Activated T-helper 1 cell treated with anti-CD3 and anti-CD28 coated beads, Interleukin-12 subunit alpha, Interleukin-12 subunit beta, Interleukin-2, Interleukin-4 antibody, amounts not matched to agents 30 ng/mL and 10 ng/mL and 1 ng/mL, durations not matched to agents 14 hours and 24 hours and 36 hours (primary cell): ENCODE measurements at regions of chr3 and their contacts with region 1.

Region 1: GRCh38 chr3:100697723-100698285 is 11.5 kb upstream of the TFG start:
- DNase-seq: no peak
- H3K4me3 Mint-ChIP-seq: no peak overlapping the region
- H3K27ac Mint-ChIP-seq: no peak overlapping the region
- H3K4me1 Mint-ChIP-seq: no peaks in the 10 kb centered on the region
- H3K27me3 Mint-ChIP-seq: peaks cover 33% of the 10 kb centered on the region

Region 2: DNA sequence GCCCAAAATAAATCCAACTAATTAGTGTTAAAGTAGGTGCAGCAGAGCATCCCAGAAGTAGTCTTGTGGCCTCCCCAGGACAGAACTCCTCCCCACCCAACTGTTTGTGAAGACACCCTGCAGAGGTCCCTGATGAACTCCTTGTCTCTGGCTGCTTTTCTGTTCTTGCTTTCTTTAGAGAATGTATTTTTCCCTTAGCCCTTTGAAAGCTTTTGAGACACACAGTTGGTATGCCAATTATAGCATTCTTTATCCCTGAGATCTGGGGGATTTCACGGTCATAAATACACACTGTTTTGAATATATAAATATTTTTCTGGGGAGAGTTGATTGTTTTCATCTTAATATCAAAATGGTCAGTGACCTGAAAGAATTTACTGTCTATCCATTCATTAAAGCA is 21.3 kb after region 1 on chr3:
- intact Hi-C with region 1: loop called (anchors 1 kb)
- DNase-seq: no peak
- H3K4me3 Mint-ChIP-seq: no peak overlapping the region
- H3K27ac Mint-ChIP-seq: no peak overlapping the region
- H3K4me1 Mint-ChIP-seq: peaks cover 44% of the 10 kb centered on the region
- H3K27me3 Mint-ChIP-seq: no peaks in the 10 kb centered on the region